Body of pancreas (tissue), 4 donors: ENCODE measurements at regions of chr18 and their contacts with region 1.

Region 1: DNA sequence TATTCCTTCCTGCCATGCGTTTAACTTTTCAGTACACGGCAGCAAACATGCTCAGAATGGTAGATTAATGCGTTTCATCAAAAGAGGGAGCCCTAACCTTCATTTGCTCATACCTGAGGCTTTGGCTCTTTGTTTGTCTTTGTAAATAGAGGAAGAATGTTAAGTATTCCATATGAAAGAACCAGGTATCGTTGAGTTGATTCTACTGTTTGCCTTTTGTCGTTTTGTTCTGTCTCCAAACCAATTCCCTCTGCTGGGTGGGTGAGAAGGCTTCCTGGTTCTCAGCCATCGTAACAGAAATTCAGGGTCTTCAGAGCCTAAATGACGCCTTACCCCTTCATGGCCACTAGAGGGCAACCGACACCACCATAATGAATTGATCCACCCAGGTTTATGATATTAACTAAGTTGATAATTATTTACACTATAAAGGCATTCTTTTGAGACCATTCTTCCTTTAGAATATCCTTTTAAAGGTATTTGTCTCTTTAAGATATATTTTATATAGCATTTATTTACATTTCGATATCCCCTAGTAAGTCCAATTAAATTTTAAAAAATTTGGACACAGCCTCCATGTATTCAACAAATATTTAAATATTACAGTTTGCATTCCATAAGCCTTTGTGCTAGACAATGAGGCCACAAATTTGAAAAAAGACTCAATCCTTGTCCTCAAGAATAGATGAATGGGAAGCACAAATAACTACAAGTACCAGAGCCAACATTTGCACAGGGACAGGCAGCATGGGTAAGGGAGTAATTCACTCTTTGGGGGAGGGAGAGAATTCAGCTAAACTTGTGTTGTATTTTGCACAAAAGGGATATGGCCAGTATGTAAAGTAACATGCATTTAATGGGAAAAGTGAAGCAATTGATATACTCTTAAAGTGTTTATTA is 48.1 kb downstream of the TIMM21 start:
- DNase-seq: peak; percentile 51 to 74 (median 62)
- ATAC-seq: peak; percentile 91
- H3K4me3 ChIP-seq: no peak overlapping the region
- H3K27ac ChIP-seq: peak overlapping the region in 3 of 4 donors; percentile 53 to 69 (median 65)
- H3K4me1 ChIP-seq: peaks cover 27% of the 10 kb centered on the region
- H3K27me3 ChIP-seq: no peaks in the 10 kb centered on the region
- CTCF ChIP-seq: peak; percentile 56 to 97 (median 91)
- POLR2A ChIP-seq: no peak

Region 2: DNA sequence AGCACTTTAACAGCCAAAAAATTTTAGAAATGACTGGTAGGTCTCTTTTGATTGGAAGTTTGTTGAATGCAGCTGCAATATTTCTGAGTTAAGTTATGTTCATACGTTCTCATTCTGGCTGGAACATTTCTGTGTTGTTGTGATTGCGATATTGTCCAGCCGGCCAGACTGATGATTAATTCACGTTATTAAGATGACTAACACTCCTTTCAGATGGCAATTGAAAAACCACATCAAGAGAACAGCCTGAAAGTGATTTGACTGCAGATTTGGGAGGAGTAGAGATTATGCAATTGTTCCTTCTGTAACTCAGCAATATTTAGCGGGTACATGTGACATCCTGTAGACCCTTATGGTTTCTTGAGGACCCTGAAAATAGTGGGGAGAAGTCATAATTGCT is 182.5 kb before region 1 on chr18:
- intact Hi-C with region 1: no loop called
- DNase-seq: peak in 1 of 4 donors; percentile 37
- ATAC-seq: peak; percentile 47
- H3K4me3 ChIP-seq: no peak overlapping the region
- H3K27ac ChIP-seq: no peak overlapping the region
- H3K4me1 ChIP-seq: no peaks in the 10 kb centered on the region
- H3K27me3 ChIP-seq: no peaks in the 10 kb centered on the region
- CTCF ChIP-seq: no peak
- POLR2A ChIP-seq: no peak

Region 3: GRCh38 chr18:74278058-74278457 is 81.6 kb after region 1 on chr18:
- intact Hi-C with region 1: loop called (anchors 10 kb)
- DNase-seq: peak in 2 of 4 donors; percentile 47 to 73
- ATAC-seq: no peak
- H3K4me3 ChIP-seq: no peak overlapping the region
- H3K27ac ChIP-seq: peak overlapping the region; percentile 19 to 95 (median 58)
- H3K4me1 ChIP-seq: peaks cover 90% of the 10 kb centered on the region
- H3K27me3 ChIP-seq: no peaks in the 10 kb centered on the region
- CTCF ChIP-seq: no peak
- POLR2A ChIP-seq: no peak

Region 4: DNA sequence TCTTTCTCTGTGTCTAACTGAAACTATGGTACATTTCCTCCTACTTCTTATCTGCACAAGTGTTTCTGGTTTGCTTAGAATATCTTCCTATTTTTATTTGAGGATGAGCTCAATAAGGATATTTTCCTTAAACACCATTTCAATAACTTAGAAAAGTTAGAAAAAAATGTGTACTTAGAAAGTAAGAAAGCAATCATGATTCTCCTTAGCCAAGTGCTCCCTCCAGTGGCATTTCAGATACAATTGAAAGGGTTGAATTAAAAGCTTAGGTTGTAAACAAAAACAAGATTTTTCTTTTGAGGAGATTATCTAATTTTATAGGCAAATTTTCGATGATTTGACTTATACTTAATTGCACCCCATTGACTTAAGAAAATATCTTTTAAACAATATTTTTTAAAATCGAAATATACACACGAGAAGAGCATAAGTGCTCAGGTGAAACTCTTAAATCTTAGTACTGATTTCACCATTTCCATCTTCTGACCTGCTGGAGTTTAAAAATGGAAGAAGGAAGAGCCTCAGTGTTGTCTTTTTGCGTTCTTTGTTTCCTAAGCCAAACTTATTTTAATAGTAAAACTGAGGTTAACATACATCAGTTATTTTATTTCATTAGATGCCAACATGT is 146.1 kb after region 1 on chr18:
- intact Hi-C with region 1: loop called (anchors 2 kb)
- DNase-seq: peak; percentile 45 to 70 (median 48)
- ATAC-seq: peak; percentile 56
- H3K4me3 ChIP-seq: no peak overlapping the region
- H3K27ac ChIP-seq: no peak overlapping the region
- H3K4me1 ChIP-seq: no peaks in the 10 kb centered on the region
- H3K27me3 ChIP-seq: no peaks in the 10 kb centered on the region
- CTCF ChIP-seq: peak; percentile 47 to 92 (median 80)
- POLR2A ChIP-seq: no peak

Region 5: DNA sequence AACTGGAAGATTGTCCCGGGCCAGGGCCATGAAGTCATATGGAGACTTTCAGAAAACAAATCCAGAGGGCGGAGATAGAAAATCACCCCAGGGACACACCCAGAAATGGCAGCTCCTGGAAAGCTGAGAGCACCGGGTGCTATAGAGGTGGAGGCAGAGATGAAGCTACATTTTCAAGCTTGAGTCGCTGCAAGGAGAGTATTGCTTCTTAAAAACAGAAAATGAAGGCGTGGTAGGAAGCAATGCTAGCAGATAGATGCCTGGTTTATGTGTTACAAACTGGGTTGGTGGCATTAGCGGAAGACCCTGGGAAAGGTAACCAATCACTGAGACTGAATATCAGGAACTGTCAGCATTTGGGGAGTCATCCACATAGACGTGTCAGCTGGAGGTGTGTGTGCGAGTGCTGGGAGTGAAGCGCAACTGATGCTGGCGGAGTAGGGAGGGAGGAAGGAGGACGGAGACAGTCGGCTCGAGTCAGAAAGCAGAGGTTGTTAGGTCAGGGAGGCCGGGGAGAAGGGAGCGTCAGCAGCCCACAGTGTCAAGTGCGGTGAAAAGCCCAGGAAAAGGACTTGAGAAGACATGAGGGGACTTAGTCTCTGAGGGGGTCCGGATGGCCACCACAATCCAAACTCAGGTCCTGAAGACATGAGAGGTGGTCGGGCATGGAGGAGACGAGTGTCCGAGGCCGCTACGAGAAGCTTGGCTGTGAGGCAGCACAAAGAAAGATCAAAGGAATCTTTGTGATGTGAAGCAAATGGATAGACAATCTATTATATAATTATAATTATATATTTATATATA is 164.6 kb after region 1 on chr18:
- intact Hi-C with region 1: no loop called
- DNase-seq: no peak
- ATAC-seq: no peak
- H3K4me3 ChIP-seq: no peak overlapping the region
- H3K27ac ChIP-seq: no peak overlapping the region
- H3K4me1 ChIP-seq: no peaks in the 10 kb centered on the region
- H3K27me3 ChIP-seq: no peaks in the 10 kb centered on the region
- CTCF ChIP-seq: no peak
- POLR2A ChIP-seq: no peak